ENCODE measurements at regions of chr4 and their contacts with region 1.

Region 1: GRCh38 chr4:13548984-13549546 is 4.8 kb upstream of the NKX3-2 start:
- DNase-seq: peak; percentile 83 to 95
- H3K4me3 ChIP-seq: peak overlapping the region; percentile 9; the same call in 1 of the 2 replicates
- H3K4me1 ChIP-seq: peaks cover 9% of the 10 kb centered on the region
- H3K27me3 ChIP-seq: no peaks in the 10 kb centered on the region

Region 2: DNA sequence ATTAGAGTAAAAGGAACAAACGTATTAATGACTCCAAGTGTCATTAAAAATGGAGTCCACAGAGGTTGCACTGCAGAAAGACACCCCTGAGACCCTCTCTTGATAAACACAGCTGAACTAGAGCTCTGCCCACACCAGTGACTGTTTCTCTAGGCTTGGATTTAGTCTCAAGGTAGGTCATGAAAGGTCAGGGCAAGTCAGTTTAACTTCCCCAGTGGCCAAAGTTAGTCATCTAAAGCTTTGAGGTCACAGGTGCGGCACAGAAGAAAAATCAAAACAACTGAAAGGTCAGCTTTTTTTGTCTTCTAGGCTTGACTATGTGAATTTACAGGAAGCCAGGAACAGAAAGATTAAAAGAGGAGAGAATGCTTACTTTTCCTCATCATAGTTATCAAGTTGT is 814.5 kb before region 1 on chr4:
- in situ Hi-C with region 1: loop called (anchors 10 kb)
- DNase-seq: no peak
- H3K4me3 ChIP-seq: no peak overlapping the region
- H3K4me1 ChIP-seq: no peaks in the 10 kb centered on the region
- H3K27me3 ChIP-seq: peaks cover 4% of the 10 kb centered on the region; the same call in 1 of the 2 replicates

Region 3: DNA sequence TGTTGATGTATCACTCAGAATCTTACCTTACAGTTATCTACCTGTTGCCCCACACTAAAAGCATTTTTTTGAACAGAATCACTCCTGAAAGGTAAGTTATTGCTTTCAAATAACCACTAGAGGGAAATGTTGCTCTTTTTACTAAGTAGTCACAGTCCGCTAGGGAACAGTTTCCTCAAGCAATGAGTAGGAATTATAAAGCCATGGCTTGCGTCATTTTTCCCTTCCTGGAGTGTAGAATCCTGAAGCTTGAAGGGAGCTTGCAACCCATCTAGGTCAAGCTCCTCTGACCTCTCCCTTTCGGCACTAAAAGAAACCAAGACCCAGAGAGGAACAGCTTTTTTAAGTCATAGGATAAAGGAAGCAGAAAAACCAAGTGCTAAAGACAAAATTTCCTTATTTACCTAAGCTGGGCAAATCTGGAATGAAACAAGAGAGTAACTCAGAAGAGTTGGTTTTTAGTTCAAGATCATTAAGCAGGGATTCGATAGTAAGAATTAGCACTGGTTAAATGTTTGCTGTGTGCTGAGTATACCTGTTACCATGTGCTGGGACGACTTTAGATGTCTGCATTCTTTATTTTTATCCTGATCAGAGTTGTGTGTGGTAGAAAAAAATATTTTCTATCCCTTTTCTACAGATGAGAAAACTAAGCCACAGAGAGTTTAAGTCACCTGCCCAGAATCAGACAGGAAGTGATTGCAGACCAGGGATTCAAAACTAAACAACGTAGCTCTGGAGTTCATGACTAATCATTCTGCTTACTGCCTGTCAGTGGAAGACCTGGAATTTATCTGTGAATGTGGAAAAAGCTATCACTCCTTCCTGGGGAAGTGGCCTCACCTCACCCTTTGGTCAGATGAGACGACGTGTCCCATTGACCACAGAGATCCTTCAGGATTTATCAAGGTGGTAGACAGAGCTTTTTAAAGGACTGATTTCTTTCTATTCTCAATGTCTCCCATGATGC is 696.4 kb before region 1 on chr4:
- in situ Hi-C with region 1: loop called (anchors 5 kb)
- DNase-seq: peak; percentile 54 to 93
- H3K4me3 ChIP-seq: no peak overlapping the region
- H3K4me1 ChIP-seq: peaks cover 4% of the 10 kb centered on the region
- H3K27me3 ChIP-seq: no peaks in the 10 kb centered on the region

Region 4: DNA sequence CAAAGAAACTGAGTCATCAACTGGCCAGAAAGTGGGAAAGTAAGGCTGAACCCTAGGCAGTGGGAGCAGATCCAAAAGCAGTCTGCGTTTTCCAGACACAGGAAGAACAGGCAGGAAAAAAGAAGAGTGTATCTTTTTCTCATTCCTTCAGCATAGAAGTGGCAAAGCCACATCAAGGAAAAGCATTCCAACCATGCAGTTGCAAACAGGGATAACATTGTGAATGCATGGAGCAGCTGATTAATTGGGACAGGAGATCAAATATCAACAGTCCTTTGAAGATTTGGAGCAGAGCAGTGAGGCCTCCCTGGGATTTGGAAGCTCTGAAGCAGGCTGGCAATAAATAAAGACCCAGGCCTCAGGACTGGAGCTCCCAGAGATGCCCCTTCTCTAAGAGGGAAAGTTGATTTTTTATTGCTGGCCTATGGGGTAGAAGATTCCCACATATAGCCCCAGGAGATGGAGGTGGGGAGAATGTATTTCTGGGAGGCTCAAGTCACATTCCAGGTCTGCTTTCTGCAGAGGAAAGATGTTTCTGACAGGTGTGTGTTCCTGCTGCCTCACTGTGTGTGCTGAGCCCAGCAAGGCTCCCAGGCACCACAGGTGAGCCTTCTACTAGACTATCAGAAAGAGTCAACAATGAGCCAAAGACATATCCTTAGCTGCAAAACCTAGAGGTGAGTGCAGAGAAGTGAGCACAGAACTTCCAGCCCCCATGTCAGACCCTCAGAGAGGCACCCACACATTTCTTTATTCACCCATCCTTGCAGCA is 287.4 kb before region 1 on chr4:
- in situ Hi-C with region 1: loop called (anchors 10 kb)
- DNase-seq: peak in 1 of 2 experiments; percentile 8
- H3K4me3 ChIP-seq: no peak overlapping the region
- H3K4me1 ChIP-seq: peaks cover 12% of the 10 kb centered on the region
- H3K27me3 ChIP-seq: no peaks in the 10 kb centered on the region